ENCODE measurements at regions of chr2 and their contacts with region 1.

Region 1: DNA sequence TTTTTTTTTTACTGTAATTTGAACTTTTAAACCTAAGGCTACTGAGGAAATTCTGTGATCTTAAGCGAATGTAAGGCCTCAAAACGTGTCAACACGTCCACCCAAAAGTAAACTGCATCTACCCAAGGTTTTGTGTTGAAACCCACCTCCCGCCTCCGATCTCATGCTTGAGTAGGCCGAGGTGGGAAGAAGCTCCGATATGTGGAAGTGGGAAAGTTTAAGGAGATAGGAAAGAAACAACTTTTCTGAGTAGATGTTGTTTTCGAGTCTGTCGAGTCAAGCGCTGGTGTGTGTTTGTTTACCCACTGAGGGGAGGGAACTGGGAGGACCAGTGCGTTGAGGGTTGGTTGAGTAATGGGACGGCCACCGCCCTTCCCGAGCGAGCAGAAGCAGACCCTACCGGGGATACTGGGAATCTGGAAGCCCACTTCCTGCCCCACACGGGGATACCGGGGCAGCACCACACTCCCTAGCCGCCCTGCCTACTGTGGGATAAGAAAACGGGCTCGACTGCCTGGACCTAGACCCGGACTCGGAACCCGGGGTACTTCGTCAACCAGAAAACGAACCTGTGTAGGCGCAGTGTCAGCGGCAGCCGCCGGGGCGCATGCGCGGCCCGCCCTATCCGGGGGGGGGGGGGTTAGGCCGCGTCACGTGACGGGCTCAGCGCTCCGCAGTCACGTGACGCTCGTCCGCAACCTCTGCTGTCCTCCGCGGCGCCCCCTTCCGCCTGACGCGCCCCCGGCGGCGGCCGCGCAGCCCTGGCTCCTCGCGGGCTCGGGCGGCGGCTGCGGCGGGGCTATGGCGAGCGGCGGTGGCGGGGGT is at the start of gene RETREG2:
- DNase-seq: peak; percentile 91 to 94
- ATAC-seq: peak; percentile 94
- H3K4me3 ChIP-seq: peak within 1 kb of the TSS; percentile 88 to 90
- H3K27ac ChIP-seq: peak within 1 kb of the TSS; percentile 87 to 88
- H3K4me1 ChIP-seq: peaks cover 0 to 3% of the 10 kb centered on the region in 2 donors
- H3K27me3 ChIP-seq: no peaks in the 10 kb centered on the region
- total RNA-seq, gene RETREG2: 48.0 to 70.6 TPM

Region 2: GRCh38 chr2:219206442-219207253 is 28.9 kb after region 1 on chr2 and contains the start of gene ZFAND2B:
- intact Hi-C with region 1: loop called in 1 of 2 experiments (anchors 1 kb)
- DNase-seq: peak; percentile 97 to 98
- ATAC-seq: peak; percentile 97
- H3K4me3 ChIP-seq: peak within 1 kb of the TSS; percentile 31 to 55
- H3K27ac ChIP-seq: peak within 1 kb of the TSS; percentile 58 to 61
- H3K4me1 ChIP-seq: no peaks in the 10 kb centered on the region
- H3K27me3 ChIP-seq: no peaks in the 10 kb centered on the region
- total RNA-seq, gene ZFAND2B: 40.7 to 43.6 TPM

Region 3: GRCh38 chr2:219218732-219219701 is 41.3 kb after region 1 on chr2 and contains the start of gene ABCB6:
- intact Hi-C with region 1: loop called in 1 of 2 experiments (anchors 2 kb)
- DNase-seq: peak; percentile 98 to 99
- ATAC-seq: peak; percentile 95
- H3K4me3 ChIP-seq: peak within 1 kb of the TSS; percentile 1 to 31
- H3K27ac ChIP-seq: peak within 1 kb of the TSS in 1 of 2 donors; percentile 96
- H3K4me1 ChIP-seq: no peaks in the 10 kb centered on the region
- H3K27me3 ChIP-seq: no peaks in the 10 kb centered on the region
- total RNA-seq, gene ABCB6: 16.9 to 28.9 TPM

Region 4: DNA sequence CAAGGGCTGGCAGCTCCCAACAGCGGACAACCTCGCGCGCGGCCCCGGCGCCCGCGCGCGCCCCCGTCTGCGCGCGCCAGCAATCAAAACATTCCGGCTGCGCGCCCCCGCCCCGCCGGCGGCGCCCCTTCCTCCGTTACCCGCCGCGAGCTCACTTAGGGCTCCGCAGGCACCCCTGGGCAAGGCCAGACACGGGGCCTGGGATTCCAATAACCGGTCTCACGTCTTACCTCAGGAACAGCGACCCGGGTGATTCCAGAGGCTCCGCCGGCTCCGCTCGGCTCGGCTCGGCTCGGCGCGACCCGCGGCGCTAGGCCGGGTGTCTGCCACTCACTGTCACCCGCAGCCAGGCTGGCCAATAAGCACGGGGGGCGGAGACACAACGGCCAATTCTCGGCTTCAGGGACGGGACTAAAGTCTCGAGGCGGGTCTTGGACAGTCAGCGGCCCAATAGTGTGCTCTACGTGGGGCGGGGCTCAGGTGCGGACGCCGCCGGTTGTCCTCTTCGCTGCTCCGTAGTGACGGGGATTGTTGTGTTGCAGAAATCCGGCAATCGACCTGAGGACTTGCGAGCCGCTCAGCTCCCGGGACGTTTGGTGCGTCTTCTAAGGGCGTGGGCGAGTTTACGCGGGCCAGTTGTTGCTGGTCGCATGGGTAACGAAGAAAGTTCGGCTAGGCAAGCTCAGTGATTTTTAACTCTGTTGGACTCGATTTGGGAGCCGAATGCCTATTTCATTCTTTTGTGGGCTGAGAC is 51.7 kb after region 1 on chr2 and contains the starts of genes ANKZF1 and ATG9A:
- intact Hi-C with region 1: loop called in 1 of 2 experiments (anchors 5 kb)
- DNase-seq: peak; percentile 99
- ATAC-seq: peak; percentile 99
- H3K4me3 ChIP-seq: peak within 1 kb of the TSS; percentile 67 to 82
- H3K27ac ChIP-seq: peak within 1 kb of the TSS; percentile 15 to 90
- H3K4me1 ChIP-seq: peaks cover 0 to 4% of the 10 kb centered on the region in 2 donors
- H3K27me3 ChIP-seq: no peaks in the 10 kb centered on the region
- total RNA-seq, gene ANKZF1: 21.4 to 55.9 TPM
- total RNA-seq, gene ATG9A: 33.9 to 36.3 TPM

Region 5: GRCh38 chr2:219245148-219245898 is 67.6 kb after region 1 on chr2 and contains the starts of genes GLB1L and STK16:
- intact Hi-C with region 1: no loop called
- DNase-seq: peak; percentile 97 to 99
- ATAC-seq: peak; percentile 95
- H3K4me3 ChIP-seq: peak within 1 kb of the TSS; percentile 37 to 75
- H3K27ac ChIP-seq: peak within 1 kb of the TSS; percentile 36 to 80
- H3K4me1 ChIP-seq: no peaks in the 10 kb centered on the region
- H3K27me3 ChIP-seq: no peaks in the 10 kb centered on the region
- total RNA-seq, gene GLB1L: 2.9 to 7.1 TPM
- total RNA-seq, gene STK16: 19.7 to 22.6 TPM

Region 6: GRCh38 chr2:219278655-219279516 is 101.1 kb after region 1 on chr2 and contains the start of gene DNAJB2:
- intact Hi-C with region 1: no loop called
- DNase-seq: peak; percentile 100
- ATAC-seq: peak; percentile 97
- H3K4me3 ChIP-seq: peak within 1 kb of the TSS; percentile 45 to 46
- H3K27ac ChIP-seq: peak within 1 kb of the TSS; percentile 53 to 76
- H3K4me1 ChIP-seq: peaks cover 0 to 4% of the 10 kb centered on the region in 2 donors
- H3K27me3 ChIP-seq: no peaks in the 10 kb centered on the region
- total RNA-seq, gene DNAJB2: 54.4 to 54.7 TPM

Region 7: DNA sequence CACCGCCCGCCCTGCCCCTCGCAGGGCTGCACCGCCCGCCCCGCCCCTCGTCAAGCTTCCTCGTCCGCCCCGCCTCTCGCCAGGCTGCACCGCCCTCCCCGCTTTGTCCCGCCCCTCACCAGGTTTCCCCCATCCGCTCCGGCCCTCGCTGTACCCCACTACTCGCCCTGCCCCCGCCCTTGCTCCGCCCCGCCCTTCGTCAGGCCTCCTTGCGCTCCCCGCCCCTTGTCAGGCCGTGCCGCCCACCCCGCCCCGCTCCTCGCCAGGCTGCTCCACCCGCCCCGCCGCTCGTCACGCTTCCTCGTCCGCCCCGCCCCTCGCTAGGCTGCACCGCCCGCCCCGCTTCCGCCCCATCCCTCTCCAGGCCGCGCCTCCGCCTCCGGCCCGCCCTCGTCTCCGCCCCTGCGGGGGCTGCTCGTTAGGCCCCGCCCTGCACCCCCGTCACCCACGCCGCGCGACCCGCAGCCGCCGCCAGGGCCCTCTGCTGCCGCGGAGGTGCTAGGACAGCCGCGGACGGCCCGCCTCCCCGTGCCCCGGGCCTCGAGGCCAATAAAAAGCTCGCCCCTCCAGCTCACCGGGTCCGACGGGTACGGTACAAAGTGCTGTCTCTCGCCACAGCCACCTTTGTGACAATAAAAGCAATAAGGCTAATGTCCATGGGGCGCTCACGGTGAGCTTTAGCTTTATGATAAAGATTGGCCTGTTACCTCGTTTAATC is 210.5 kb after region 1 on chr2:
- intact Hi-C with region 1: loop called (anchors 5 to 10 kb)
- DNase-seq: peak; percentile 99 to 100
- ATAC-seq: peak; percentile 94
- H3K4me3 ChIP-seq: no peak overlapping the region
- H3K27ac ChIP-seq: peak overlapping the region in 1 of 2 donors; percentile 7
- H3K4me1 ChIP-seq: no peaks in the 10 kb centered on the region
- H3K27me3 ChIP-seq: no peaks in the 10 kb centered on the region